ENCODE measurements at regions of chr6 and their contacts with region 1.

Region 1: GRCh38 chr6:109382576-109383437 is 540 bp upstream of the CD164 start:
- DNase-seq: peak; percentile 86 to 96 (median 91)
- ATAC-seq: peak; percentile 80
- H3K4me3 ChIP-seq: peak overlapping the region; percentile 83
- H3K27ac ChIP-seq: peak overlapping the region; percentile 99
- H3K4me1 ChIP-seq: peaks cover 4 to 26% of the 10 kb centered on the region in 2 experiments; a peak in 4 of 5 replicates
- H3K27me3 ChIP-seq: no peaks in the 10 kb centered on the region
- CTCF ChIP-seq: peak; percentile 56 to 83 (median 62)
- EP300 ChIP-seq: no peak; the same call in 1 of the 2 replicates
- POLR2A ChIP-seq: peak; percentile 59
- RAD21 ChIP-seq: peak; percentile 77 to 80

Region 2: GRCh38 chr6:108541838-108542759 is 840.7 kb before region 1 on chr6:
- CTCF ChIA-PET with region 1: no interaction called
- POLR2A ChIA-PET with region 1: no interaction called
- in situ Hi-C with region 1: no loop called
- intact Hi-C with region 1: loop called (anchors 10 kb)
- DNase-seq: peak; percentile 64 to 81 (median 64)
- ATAC-seq: peak; percentile 94
- H3K4me3 ChIP-seq: no peak overlapping the region
- H3K27ac ChIP-seq: no peak overlapping the region
- H3K4me1 ChIP-seq: no peaks in the 10 kb centered on the region
- H3K27me3 ChIP-seq: 0 out of 5 replicates have a peak, but pooled peaks cover 0 to 4% of the 10 kb centered on the region in 2 experiments
- CTCF ChIP-seq: peak; percentile 83 to 96 (median 87)
- EP300 ChIP-seq: no peak
- POLR2A ChIP-seq: no peak
- RAD21 ChIP-seq: peak; percentile 98 to 99

Region 3: GRCh38 chr6:109095027-109095834 is 287.6 kb before region 1 on chr6 and contains the start of gene CEP57L1:
- CTCF ChIA-PET with region 1: no interaction called
- POLR2A ChIA-PET with region 1: interaction called, 10 read pairs
- in situ Hi-C with region 1: no loop called
- intact Hi-C with region 1: loop called (anchors 2 kb)
- DNase-seq: peak; percentile 73 to 98 (median 94)
- ATAC-seq: peak; percentile 85
- H3K4me3 ChIP-seq: peak within 1 kb of the TSS; percentile 84
- H3K27ac ChIP-seq: peak within 1 kb of the TSS; percentile 94
- H3K4me1 ChIP-seq: peaks cover 0 to 10% of the 10 kb centered on the region in 2 experiments; a peak in 2 of 5 replicates
- H3K27me3 ChIP-seq: no peaks in the 10 kb centered on the region
- CTCF ChIP-seq: peak; percentile 31 to 46 (median 38); a peak in 5 of 6 replicates
- EP300 ChIP-seq: no peak; the same call in none of the 2 replicates
- POLR2A ChIP-seq: peak; percentile 80
- RAD21 ChIP-seq: no peak
- polyA plus RNA-seq, gene CEP57L1: 70.0 to 88.6 TPM

Region 4: DNA sequence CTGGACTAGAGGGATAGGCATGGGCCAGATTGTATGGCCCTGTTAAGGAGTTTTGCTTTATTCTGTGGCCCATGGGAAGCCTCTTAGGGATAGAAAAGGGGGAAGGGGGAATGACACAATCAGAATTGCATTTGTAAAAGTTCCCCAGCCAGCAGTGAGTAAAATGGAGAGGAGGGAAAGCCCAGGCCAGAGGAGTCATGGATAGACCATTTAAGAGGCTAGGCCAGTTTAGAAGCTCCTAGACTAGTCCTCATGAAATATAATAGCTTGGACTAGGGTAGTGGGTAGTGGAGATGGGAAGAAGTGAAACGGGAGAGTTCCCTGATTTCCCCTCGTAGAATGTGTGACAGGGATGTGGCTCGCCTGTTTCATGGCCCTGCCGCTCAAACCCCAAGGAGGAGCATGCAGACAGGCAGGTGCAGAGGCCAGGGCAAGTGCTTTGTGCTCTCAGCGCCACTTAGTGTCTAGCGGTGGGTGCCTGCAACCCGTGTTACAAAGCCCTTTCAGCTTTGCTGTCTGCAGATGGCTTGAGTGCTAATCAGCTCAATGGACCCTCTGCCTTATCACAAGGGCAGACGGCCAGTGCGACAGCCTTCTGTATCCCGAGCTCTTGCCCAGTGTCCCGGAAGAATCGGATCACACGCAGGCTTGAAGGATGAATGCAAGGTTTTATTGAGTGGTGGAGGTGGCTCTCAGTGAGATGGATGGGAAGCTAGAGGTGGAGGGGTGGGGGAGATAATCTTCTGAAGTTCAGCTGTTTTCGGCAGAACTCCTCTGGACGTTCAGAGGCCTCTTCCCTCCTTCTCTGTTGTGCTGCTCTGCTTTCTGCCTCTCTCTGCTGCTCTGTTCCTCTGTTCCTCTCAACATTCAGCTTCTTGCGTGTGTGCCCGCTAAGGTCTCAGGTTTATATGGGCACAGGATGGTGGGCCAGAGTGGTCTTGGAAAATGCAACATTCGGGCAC is 146.4 kb before region 1 on chr6:
- CTCF ChIA-PET with region 1: no interaction called
- POLR2A ChIA-PET with region 1: interaction called, 13 read pairs
- in situ Hi-C with region 1: no loop called
- intact Hi-C with region 1: loop called (anchors 1 kb)
- DNase-seq: peak; percentile 43 to 92 (median 60)
- ATAC-seq: peak; percentile 94
- H3K4me3 ChIP-seq: 0 out of 2 replicates have a peak overlapping the region, but pooled peaks have one; percentile 1
- H3K27ac ChIP-seq: peak overlapping the region; percentile 93
- H3K4me1 ChIP-seq: peaks cover 19 to 57% of the 10 kb centered on the region in 2 experiments
- H3K27me3 ChIP-seq: no peaks in the 10 kb centered on the region
- CTCF ChIP-seq: peak; percentile 65 to 76 (median 73)
- EP300 ChIP-seq: peak; percentile 23; the same call in 1 of the 2 replicates
- POLR2A ChIP-seq: no peak
- RAD21 ChIP-seq: peak; percentile 75 to 92

Region 5: GRCh38 chr6:109397020-109397419 is 14.2 kb after region 1 on chr6:
- CTCF ChIA-PET with region 1: no interaction called
- POLR2A ChIA-PET with region 1: interaction called, 11 read pairs
- in situ Hi-C with region 1: no loop called
- intact Hi-C with region 1: no loop called
- DNase-seq: peak in 3 of 4 experiments; percentile 27 to 48 (median 31)
- ATAC-seq: peak; percentile 86
- H3K4me3 ChIP-seq: no peak overlapping the region
- H3K27ac ChIP-seq: no peak overlapping the region
- H3K4me1 ChIP-seq: peaks cover 0 to 3% of the 10 kb centered on the region in 2 experiments; a peak in 4 of 5 replicates
- H3K27me3 ChIP-seq: no peaks in the 10 kb centered on the region; a peak in 1 of 5 replicates
- CTCF ChIP-seq: peak; percentile 32 to 72 (median 50); a peak in 4 of 6 replicates
- EP300 ChIP-seq: no peak
- POLR2A ChIP-seq: no peak
- RAD21 ChIP-seq: peak; percentile 79 to 84

Region 6: DNA sequence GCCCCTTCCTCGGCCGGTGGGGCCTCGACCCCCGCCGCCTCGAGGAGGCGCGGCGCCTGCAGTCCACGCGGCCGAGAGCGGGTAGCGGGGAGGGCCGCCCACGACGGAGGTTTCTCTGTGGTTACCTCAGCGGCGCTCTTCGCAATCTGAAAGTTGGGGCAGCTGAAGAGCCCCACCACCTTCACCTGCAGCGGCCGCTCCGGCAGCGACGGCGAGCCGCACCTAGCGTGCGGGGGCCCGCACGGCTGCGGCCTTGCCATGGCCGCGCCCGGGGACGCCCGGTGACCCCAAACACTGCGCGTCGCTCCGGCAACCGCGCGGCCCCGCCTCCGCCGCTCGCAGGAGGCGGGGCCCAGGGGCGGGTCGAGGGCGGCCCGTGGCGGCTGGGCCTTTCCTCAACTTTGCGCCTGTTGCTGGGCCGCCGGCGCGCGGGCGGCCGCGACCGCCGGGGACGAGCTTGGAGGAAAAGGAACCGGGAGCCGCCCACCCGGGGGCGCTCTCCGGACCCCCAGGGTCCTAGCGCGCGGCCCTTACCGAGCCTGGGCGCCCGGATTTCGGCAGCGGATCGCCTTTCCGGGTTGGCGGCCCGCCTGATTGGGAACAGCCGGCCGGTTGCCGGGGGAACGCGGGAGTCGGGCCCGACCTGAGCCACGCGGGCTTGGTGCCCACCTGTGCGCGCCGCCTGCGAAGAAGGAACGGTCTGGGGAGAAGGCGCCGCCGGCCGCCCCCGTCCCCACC is 57.7 kb after region 1 on chr6 and contains the starts of genes PPIL6 and SMPD2:
- CTCF ChIA-PET with region 1: no interaction called
- POLR2A ChIA-PET with region 1: interaction called, 7 read pairs
- in situ Hi-C with region 1: no loop called
- intact Hi-C with region 1: loop called (anchors 2 kb)
- DNase-seq: peak; percentile 92 to 95 (median 94)
- ATAC-seq: peak; percentile 90
- H3K4me3 ChIP-seq: peak within 1 kb of the TSS; percentile 86
- H3K27ac ChIP-seq: peak within 1 kb of the TSS; percentile 74
- H3K4me1 ChIP-seq: peaks cover 13 to 27% of the 10 kb centered on the region in 2 experiments; a peak in 4 of 5 replicates
- H3K27me3 ChIP-seq: no peaks in the 10 kb centered on the region
- CTCF ChIP-seq: peak in 2 of 3 experiments; percentile 45 to 47; a peak in 4 of 6 replicates
- EP300 ChIP-seq: 0 out of 2 replicates have a peak, but pooled peaks have one; percentile 19
- POLR2A ChIP-seq: peak; percentile 75
- RAD21 ChIP-seq: no peak
- polyA plus RNA-seq, gene PPIL6: 0.13 to 0.14 TPM
- polyA plus RNA-seq, gene SMPD2: 0.13 to 1.2 TPM

Region 7: GRCh38 chr6:109896341-109896740 is 513.5 kb after region 1 on chr6:
- CTCF ChIA-PET with region 1: no interaction called
- POLR2A ChIA-PET with region 1: no interaction called
- in situ Hi-C with region 1: no loop called
- intact Hi-C with region 1: no loop called
- DNase-seq: no peak
- ATAC-seq: no peak
- H3K4me3 ChIP-seq: no peak overlapping the region
- H3K27ac ChIP-seq: no peak overlapping the region
- H3K4me1 ChIP-seq: no peaks in the 10 kb centered on the region
- H3K27me3 ChIP-seq: peaks cover 4 to 23% of the 10 kb centered on the region in 2 experiments; a peak in 4 of 5 replicates
- CTCF ChIP-seq: no peak
- EP300 ChIP-seq: no peak
- POLR2A ChIP-seq: no peak
- RAD21 ChIP-seq: no peak